Vagina (tissue), 2 donors: ENCODE measurements at regions of chr1 and their contacts with region 1.

Region 1: DNA sequence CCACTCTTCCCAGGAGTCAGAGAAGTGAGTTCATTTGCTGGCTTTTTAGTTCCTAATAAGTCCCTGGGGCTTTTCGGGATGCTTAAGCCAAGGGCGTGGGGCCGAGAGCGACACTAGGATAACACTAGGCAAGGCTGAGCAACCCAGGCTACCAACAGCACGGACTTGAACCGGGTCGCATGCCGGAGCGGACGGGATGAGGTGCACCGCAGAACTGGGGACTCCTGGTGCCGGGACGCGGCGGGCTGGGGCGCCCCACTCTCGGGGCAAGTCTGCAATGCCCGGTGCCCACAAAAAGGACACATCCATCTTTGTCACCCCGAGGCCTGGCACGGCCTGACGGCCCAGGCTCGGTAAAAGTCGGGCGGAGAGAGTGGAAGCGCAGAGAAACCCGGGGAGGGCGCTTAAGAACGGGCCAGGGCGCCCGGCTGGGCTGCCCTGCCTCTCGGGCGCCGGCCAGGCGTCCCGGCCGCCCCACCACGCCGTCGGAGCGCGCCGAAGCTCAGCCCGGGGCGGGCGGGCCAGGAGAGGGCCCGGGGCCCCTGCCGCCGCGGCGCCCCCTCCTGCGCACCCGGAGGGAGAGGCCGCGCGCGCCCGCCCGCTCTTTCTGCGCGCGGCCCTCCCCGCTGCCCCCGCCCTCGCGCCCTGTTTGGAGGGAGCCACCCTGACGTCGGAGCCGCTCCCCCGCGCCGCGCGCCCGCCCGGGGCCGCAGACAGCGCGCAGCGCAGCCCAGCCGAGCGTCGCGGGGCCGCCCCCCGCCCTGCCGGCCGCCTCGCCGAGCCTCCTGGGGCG is at the start of gene NBL1:
- DNase-seq: no peak
- H3K4me3 ChIP-seq: peak within 1 kb of the TSS; percentile 82 to 94
- H3K27ac ChIP-seq: peak within 1 kb of the TSS; percentile 98
- H3K4me1 ChIP-seq: peaks cover 63% of the 10 kb centered on the region
- H3K27me3 ChIP-seq: no peaks in the 10 kb centered on the region
- CTCF ChIP-seq: no peak
- POLR2A ChIP-seq: peak in 1 of 2 donors; percentile 45
- total RNA-seq, gene NBL1: 148 TPM

Region 2: GRCh38 chr1:19385869-19386591 is 257.8 kb before region 1 on chr1:
- intact Hi-C with region 1: loop called (anchors 5 kb)
- DNase-seq: no peak
- H3K4me3 ChIP-seq: peak overlapping the region in 1 of 2 donors; percentile 5
- H3K27ac ChIP-seq: peak overlapping the region; percentile 80
- H3K4me1 ChIP-seq: peaks cover 82% of the 10 kb centered on the region
- H3K27me3 ChIP-seq: no peaks in the 10 kb centered on the region
- CTCF ChIP-seq: no peak
- POLR2A ChIP-seq: no peak

Region 3: GRCh38 chr1:19485362-19486187 is 158.2 kb before region 1 on chr1 and contains the start of gene CAPZB:
- intact Hi-C with region 1: loop called (anchors 2 kb)
- DNase-seq: no peak
- H3K4me3 ChIP-seq: peak within 1 kb of the TSS; percentile 70 to 100
- H3K27ac ChIP-seq: peak within 1 kb of the TSS; percentile 97
- H3K4me1 ChIP-seq: peaks cover 61% of the 10 kb centered on the region
- H3K27me3 ChIP-seq: no peaks in the 10 kb centered on the region
- CTCF ChIP-seq: no peak
- POLR2A ChIP-seq: peak in 1 of 2 donors; percentile 78
- total RNA-seq, gene CAPZB: 152 TPM

Region 4: DNA sequence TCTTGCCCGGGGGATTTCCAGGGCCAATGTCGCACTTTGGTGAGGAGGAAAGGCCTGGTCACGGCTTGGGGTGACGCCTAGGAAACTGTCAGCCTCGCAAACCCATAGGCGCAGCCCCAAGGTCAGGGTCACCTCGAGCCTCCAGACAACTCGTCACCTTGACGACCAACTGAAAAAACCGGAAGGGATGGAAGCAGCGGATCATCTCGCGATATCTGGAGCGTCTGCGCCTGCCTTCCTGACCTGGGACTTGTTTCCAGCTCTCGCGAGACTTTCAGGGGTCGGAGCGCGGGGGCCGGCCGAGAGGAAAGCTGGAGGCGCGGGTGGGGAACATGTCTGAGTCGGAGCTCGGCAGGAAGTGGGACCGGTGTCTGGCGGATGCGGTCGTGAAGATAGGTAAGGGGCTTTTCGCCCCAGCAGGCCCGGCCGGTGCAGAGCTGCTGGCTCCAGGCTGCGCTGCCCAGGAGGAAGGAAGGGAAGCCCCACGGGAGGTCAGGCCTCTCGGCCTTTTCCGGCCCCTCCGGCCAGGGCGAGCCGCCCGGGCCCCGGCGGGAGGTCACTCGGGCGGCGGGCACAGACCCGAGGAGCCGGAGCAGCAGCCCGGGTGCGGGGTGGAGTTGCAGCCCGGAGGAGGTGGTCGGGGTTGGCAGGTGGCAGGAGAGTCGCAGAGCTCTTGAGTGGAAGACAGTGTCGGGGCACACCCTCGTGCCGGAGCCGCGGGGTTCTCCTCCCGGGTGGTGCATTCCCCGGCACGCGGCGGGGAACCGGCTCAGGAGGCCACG is 46.9 kb before region 1 on chr1:
- intact Hi-C with region 1: loop called (anchors 5 kb)
- DNase-seq: peak; percentile 97 to 98
- H3K4me3 ChIP-seq: peak overlapping the region; percentile 95 to 99
- H3K27ac ChIP-seq: peak overlapping the region; percentile 96
- H3K4me1 ChIP-seq: peaks cover 50% of the 10 kb centered on the region
- H3K27me3 ChIP-seq: no peaks in the 10 kb centered on the region
- CTCF ChIP-seq: no peak
- POLR2A ChIP-seq: peak in 1 of 2 donors; percentile 71

Region 5: DNA sequence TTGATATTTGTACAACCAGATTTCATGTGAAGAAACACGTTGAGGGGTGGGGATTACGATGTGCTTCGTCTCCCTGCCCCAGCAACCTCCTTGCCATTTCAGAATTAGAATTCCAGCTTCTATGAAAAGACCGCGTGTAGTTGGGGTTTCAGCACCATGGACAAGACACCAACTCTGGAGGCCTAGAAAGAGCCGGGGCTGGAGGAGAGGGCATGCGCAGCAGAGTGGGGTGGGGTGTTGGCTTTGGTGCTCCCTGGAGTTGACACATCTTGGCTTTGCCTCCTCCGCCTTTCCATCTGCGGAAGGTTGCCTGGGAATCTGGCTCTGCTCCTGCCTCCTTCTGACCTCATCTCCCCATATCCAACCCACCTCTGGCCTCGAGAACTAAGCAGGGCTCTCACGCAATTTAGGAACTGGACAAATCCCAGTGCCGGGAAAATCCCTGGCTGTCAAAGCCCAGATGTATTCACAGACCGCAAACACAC is 32.7 kb after region 1 on chr1:
- intact Hi-C with region 1: no loop called
- DNase-seq: no peak
- H3K4me3 ChIP-seq: no peak overlapping the region
- H3K27ac ChIP-seq: no peak overlapping the region
- H3K4me1 ChIP-seq: no peaks in the 10 kb centered on the region
- H3K27me3 ChIP-seq: no peaks in the 10 kb centered on the region
- CTCF ChIP-seq: no peak
- POLR2A ChIP-seq: no peak